Activated CD8-positive, alpha-beta T cell treated with anti-CD3 and anti-CD28 coated beads, Interleukin-2, amount 10 ng/mL, durations not matched to agents 7 days and 5 days (primary cell): ENCODE measurements at regions of chr7 and their contacts with region 1.

Region 1: DNA sequence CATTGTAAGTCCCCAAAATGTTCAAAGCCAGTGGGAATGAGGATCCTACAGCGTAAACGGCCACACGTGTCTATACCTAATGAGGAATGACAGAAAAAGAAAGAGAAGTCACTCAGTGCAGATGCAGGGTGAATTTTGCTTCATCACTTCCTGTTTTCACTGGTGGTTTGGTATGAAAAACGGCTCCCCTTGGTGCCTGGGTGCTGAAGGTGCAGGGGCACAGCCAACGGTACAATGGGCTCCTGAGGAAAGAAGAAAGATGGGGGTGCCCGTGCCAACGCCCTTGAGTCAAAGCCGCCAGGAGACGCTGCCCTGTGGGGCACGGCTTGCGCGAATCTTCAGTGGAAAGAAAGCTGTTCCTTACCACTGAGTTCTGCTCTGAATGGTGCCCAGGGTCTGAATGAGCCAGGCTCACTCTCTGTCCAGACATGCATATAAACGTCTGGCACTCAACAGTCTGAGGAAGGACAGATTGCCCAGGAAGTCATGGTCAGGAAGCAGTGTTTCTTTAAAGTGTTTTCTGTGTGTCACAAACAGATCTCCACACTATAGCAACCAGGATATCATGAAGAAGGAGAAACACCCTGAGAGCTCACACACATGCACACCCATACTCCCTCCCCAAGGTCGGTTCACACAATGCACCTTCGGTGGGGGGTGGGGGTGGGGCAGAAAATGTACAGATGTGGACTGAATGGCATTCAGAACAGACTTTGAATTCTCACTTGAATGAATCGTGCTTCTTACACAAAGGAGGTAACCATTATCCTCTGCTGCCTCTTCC is 105.8 kb downstream of the ELMO1 start:
- DNase-seq: peak; percentile 81
- ATAC-seq: peak; percentile 83
- H3K4me3 Mint-ChIP-seq: peak overlapping the region; percentile 98
- H3K27ac Mint-ChIP-seq: peak overlapping the region; percentile 99
- H3K4me1 Mint-ChIP-seq: peaks cover 57% of the 10 kb centered on the region
- H3K27me3 Mint-ChIP-seq: no peaks in the 10 kb centered on the region

Region 2: DNA sequence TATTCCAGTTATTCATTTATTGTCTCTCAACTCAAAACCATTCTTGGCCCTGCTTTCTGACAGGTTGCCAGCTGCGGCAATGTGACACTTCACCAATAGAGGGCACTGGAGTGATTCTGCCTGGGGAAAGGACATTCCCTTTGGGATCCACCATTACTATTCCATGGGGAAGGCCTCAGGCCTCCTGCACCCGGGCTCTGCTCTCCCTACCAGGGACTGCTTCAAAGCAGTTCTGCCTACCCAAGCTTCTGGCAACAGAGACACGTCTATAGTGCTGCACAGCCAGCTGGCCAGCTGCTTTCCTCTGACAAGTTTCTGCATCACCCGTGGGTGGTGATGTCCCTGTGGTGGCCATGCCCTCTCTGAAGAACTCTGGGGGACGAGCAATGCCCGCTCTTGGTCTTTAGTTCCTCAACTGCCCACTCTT is 58.1 kb before region 1 on chr7:
- CTCF ChIA-PET with region 1: interaction called, 35 read pairs
- POLR2A ChIA-PET with region 1: no interaction called
- DNase-seq: peak; percentile 49
- ATAC-seq: no peak
- H3K4me3 Mint-ChIP-seq: no peak overlapping the region
- H3K27ac Mint-ChIP-seq: no peak overlapping the region
- H3K4me1 Mint-ChIP-seq: peaks cover 26% of the 10 kb centered on the region
- H3K27me3 Mint-ChIP-seq: no peaks in the 10 kb centered on the region

Region 3: GRCh38 chr7:37310327-37311080 is 32.4 kb before region 1 on chr7:
- CTCF ChIA-PET with region 1: interaction called, 12 read pairs
- POLR2A ChIA-PET with region 1: interaction called, 6 read pairs
- DNase-seq: peak; percentile 39
- ATAC-seq: peak; percentile 84
- H3K4me3 Mint-ChIP-seq: peak overlapping the region; percentile 45
- H3K27ac Mint-ChIP-seq: peak overlapping the region; percentile 88
- H3K4me1 Mint-ChIP-seq: peaks cover 48% of the 10 kb centered on the region
- H3K27me3 Mint-ChIP-seq: no peaks in the 10 kb centered on the region